SK-N-SH (cell line): ENCODE measurements at regions of chr2 and their contacts with region 1.

Region 1: DNA sequence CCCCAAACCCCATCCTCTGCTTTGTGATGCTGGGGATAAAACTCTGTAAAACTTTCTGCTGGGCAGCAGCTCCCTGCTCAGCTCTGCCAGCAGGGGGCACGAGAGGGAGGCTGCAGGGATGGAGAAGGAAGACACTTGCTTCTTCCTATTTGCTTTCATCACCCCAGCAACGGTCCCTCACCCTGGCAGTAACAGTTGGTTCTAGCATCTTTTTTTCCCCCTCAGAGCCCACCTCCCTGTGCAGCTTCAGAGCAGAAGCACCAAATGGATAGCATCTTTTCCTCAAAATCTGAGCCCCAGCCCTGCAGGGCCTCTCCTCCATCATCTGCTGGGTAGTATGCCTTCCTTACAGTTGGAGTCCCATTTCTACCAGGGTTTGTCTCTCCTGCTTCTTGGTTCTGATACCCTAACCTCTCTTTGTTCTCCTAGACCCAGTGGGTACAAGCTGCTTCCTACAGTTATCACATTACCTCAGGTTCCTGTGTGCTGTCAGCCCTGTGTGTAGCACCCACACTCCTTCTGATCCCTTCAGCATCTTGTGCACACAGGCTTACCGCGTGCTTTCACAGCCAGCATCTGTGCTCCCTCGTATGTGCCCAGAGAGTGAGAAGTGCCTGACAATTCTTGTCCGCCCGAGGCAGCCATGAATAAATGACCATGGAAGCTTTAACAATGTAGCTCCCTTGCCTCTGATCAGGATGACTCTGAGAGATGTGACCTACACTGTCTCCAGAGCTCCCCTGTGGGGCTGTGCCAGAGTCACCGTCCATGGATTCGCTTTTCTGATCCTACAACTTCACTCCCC is 14.5 kb downstream of the CKAP2L start:
- DNase-seq: peak; percentile 72
- H3K4me3 ChIP-seq: no peak overlapping the region; a peak in 1 of 4 replicates
- H3K27ac ChIP-seq: peak overlapping the region; percentile 1 to 57; a peak in 3 of 4 replicates
- H3K4me1 ChIP-seq: peaks cover 0 to 7% of the 10 kb centered on the region in 2 experiments; a peak in 1 of 4 replicates
- H3K27me3 ChIP-seq: no peaks in the 10 kb centered on the region
- CTCF ChIP-seq: peak; percentile 98
- EP300 ChIP-seq: no peak
- RAD21 ChIP-seq: peak; percentile 76

Region 2: DNA sequence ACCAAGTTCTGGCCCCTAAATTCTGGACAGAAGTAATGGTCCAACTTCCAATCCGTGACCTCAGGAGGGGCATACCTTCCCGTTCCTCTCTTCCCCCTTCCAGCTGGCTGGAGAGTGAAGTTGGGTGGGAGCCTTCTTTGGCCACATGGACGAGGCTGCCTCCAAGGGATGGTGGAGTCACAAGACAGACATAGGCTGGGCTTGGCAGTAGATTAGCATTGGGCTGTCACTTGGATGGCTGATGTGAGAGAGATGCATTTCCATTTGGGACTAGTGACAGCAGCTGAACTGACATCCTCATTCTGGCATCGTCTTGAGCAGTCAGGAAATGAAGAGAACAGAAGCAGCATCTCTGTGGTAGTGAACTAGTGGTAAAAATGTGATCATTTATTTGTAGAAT is 16.5 kb before region 1 on chr2:
- CTCF ChIA-PET with region 1: interaction called, 32 read pairs
- POLR2A ChIA-PET with region 1: no interaction called
- DNase-seq: no peak
- H3K4me3 ChIP-seq: no peak overlapping the region
- H3K27ac ChIP-seq: no peak overlapping the region
- H3K4me1 ChIP-seq: peaks cover 0 to under 1% of the 10 kb centered on the region in 2 experiments; a peak in 1 of 4 replicates
- H3K27me3 ChIP-seq: no peaks in the 10 kb centered on the region
- CTCF ChIP-seq: no peak
- EP300 ChIP-seq: no peak
- RAD21 ChIP-seq: no peak

Region 3: DNA sequence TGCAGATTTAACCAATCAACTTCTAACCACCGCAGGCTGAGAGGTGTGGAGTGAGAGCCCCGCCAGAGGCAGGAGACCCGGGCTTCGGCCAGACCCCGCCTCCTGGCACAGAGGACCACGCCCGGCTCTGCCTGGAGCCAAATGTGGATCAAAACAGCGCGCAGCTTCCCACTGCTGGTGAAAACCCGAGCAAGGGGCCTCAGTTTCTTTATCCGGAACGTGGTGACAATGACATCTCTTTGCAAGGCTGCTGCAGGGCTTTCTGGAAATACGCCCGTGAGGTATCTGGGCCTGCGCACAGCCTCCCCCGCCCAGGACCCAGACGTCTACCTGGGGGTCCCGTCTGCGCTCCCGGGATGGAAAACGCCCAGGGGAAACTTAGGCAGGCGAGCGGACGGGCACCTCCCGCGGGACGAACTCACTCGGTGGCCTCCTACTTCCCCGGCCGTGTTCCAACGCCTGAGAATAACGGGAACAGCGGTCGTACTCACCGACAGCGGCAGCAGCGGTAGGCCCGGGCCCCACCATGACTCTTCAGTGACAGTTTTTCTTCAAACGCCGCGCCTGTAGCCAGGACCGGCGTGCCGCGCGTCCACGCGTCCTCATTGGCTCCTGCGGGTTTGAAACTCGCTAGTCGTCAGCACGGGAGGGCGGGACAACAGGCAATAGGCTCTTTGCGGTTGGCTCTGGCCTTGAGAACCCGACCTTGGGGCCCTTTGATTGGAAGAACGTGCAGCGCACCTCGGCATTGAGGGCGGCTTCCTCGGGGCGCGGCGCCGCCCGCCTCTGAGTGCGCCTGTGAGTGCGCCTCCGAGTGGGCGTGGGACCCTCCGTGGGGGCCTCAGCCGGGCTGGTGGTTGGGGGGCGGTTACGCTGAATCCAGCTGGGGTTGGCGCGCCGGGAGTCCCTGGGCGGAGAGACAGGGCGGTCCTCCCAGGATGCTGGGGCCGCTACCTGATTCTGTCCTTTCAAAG is 14.4 kb after region 1 on chr2 and contains the start of gene CKAP2L:
- CTCF ChIA-PET with region 1: interaction called, 40 read pairs
- POLR2A ChIA-PET with region 1: interaction called, 4 read pairs
- DNase-seq: peak; percentile 95
- H3K4me3 ChIP-seq: peak within 1 kb of the TSS; percentile 89 to 95
- H3K27ac ChIP-seq: peak within 1 kb of the TSS; percentile 53 to 56
- H3K4me1 ChIP-seq: peaks cover 11 to 15% of the 10 kb centered on the region in 2 experiments; a peak in 3 of 4 replicates
- H3K27me3 ChIP-seq: no peaks in the 10 kb centered on the region
- CTCF ChIP-seq: 0 out of 2 replicates have a peak, but pooled peaks have one; percentile 9
- EP300 ChIP-seq: no peak
- RAD21 ChIP-seq: no peak
- polyA plus RNA-seq, gene CKAP2L: 2.9 TPM in 2 replicates

Region 4: DNA sequence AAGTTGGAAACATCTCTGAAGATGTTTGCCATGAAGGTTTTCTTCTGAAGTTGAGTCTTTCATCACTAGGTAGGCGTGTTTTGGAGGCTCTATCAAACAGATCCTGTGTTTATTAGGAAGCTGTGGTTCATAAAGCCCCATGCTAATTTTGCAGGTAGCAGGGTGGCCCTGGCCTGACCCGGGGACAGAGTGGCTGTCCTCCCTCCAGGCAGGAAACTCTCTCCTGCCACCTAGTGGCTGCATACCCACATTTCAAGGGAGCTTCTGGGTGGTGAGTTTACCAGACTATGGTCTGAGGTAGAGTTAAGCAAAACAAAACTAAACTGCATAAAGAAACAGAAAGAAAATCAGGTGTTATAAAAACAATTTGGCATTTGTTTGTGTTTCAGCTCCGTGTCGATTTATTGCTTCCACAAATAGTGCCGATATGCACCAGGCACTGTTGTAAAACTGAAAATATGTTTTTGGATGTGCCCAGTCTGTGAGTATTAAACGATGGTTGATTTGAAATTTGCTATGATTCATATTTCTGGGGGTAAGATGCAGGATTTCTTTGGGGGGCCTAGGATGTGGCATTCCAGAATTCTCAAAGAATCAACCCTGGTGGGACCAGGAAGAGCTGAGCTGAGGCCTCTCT is 135.0 kb after region 1 on chr2:
- CTCF ChIA-PET with region 1: interaction called, 15 read pairs
- POLR2A ChIA-PET with region 1: no interaction called
- DNase-seq: peak; percentile 50
- H3K4me3 ChIP-seq: no peak overlapping the region; a peak in 1 of 4 replicates
- H3K27ac ChIP-seq: no peak overlapping the region
- H3K4me1 ChIP-seq: peaks cover 0 to 11% of the 10 kb centered on the region in 2 experiments; a peak in 1 of 4 replicates
- H3K27me3 ChIP-seq: peaks cover 4% of the 10 kb centered on the region; the same call in 1 of the 2 replicates
- CTCF ChIP-seq: peak; percentile 54
- EP300 ChIP-seq: no peak
- RAD21 ChIP-seq: peak; percentile 45

Region 5: GRCh38 chr2:112941753-112942658 is 192.0 kb after region 1 on chr2:
- CTCF ChIA-PET with region 1: interaction called, 102 read pairs
- POLR2A ChIA-PET with region 1: no interaction called
- DNase-seq: peak; percentile 53
- H3K4me3 ChIP-seq: peak overlapping the region in 1 of 2 experiments; percentile 17; a peak in 1 of 4 replicates
- H3K27ac ChIP-seq: no peak overlapping the region
- H3K4me1 ChIP-seq: no peaks in the 10 kb centered on the region; a peak in 1 of 4 replicates
- H3K27me3 ChIP-seq: peaks cover 5% of the 10 kb centered on the region; the same call in 1 of the 2 replicates
- CTCF ChIP-seq: peak; percentile 88
- EP300 ChIP-seq: no peak
- RAD21 ChIP-seq: peak; percentile 82

Region 6: DNA sequence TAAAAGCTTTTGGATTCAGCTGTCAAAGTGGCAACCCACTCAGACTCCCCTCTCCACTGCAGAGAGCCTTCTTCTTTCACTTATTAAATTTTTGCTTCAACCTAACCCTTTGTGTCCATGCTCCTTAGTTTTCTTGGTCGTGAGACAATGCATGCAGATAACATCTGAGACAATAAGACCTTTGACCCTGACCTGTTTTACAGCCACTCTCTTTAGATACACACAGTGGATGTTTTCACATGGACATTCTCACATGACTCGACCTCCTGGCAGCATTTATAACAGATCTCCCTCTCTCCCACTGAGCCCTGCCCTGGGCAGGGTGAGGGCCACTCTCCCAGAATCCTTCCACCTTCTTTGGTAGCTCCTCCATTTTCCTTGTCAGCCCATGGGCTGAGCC is 197.4 kb after region 1 on chr2:
- CTCF ChIA-PET with region 1: interaction called, 102 read pairs
- POLR2A ChIA-PET with region 1: no interaction called
- DNase-seq: no peak
- H3K4me3 ChIP-seq: no peak overlapping the region
- H3K27ac ChIP-seq: no peak overlapping the region
- H3K4me1 ChIP-seq: no peaks in the 10 kb centered on the region
- H3K27me3 ChIP-seq: peaks cover 12% of the 10 kb centered on the region; the same call in 1 of the 2 replicates
- CTCF ChIP-seq: no peak
- EP300 ChIP-seq: no peak
- RAD21 ChIP-seq: no peak

Region 7: DNA sequence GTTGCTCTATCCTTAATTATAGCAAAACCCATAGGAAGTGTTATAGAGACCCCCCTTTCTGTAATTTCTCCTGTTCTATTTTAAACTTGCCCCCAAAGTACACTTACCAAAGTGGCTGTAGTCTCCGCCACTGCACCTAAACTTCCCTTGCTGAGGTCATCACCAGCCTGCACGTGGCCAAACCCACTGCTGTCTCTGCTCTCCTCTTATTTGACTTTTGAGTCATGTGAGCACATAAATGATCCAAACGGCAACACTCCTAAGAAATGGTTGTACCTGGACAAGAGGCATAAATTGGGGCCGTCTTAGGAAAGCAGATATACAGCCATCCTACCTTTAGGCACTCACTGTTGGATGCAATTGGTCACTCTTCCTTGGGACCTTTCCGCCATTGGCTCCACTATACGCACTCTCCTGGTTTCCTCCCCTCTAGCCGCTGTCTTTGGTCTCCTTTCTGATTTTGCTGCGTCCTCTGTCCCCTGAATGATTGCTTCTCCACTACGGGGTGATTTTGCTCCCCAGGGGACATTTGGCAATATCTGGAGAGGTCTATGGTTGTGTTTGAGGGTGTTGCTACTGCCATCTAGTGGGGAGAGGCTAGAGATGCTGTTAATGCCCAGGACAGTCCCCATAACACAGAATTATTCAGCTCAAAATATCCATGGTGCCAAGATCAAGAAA is 208.6 kb after region 1 on chr2:
- CTCF ChIA-PET with region 1: interaction called, 46 read pairs
- POLR2A ChIA-PET with region 1: no interaction called
- DNase-seq: peak; percentile 55
- H3K4me3 ChIP-seq: no peak overlapping the region
- H3K27ac ChIP-seq: no peak overlapping the region
- H3K4me1 ChIP-seq: no peaks in the 10 kb centered on the region; a peak in 1 of 4 replicates
- H3K27me3 ChIP-seq: peaks cover 44% of the 10 kb centered on the region; the same call in 1 of the 2 replicates
- CTCF ChIP-seq: peak; percentile 88
- EP300 ChIP-seq: no peak
- RAD21 ChIP-seq: peak; percentile 60